GM12878 (cell line): ENCODE measurements at regions of chr1 and their contacts with region 1.

Region 1: DNA sequence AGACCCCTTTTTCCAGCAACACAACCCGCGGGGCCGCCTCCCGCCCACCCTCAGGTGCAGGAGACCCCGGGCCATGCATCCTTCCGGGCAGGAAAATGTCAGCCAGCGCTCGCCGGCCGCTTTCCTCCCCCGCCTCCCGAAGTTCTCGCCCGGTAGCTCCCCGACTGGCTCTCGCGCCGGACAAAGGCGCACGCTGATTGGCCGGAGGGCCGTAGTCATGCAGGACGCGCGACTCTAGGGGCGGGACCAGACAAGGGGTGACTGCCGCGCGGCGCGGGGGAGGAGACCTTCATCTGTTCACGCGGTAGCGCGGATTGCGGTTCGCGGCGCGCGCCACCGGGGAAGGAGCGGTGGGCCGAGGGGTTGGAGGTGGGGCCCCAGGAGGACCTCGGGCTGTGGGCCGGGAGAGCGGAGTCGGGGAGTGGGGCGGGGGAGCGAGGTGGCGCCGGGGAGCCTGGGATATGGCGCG is at the start of gene FLVCR1:
- DNase-seq: peak; percentile 79
- ATAC-seq: peak; percentile 97
- H3K4me3 ChIP-seq: peak within 1 kb of the TSS; percentile 98
- H3K27ac ChIP-seq: peak within 1 kb of the TSS; percentile 79
- H3K4me1 ChIP-seq: peaks cover 6% of the 10 kb centered on the region
- H3K27me3 ChIP-seq: no peaks in the 10 kb centered on the region
- CTCF ChIP-seq: no peak
- EP300 ChIP-seq: no peak
- POLR2A ChIP-seq: peak; percentile 85
- RAD21 ChIP-seq: no peak
- polyA plus RNA-seq, gene FLVCR1: 7.1 to 8.6 TPM

Region 2: GRCh38 chr1:212791676-212792395 is 66.2 kb before region 1 on chr1 and contains the starts of genes NSL1 and TATDN3:
- CTCF ChIA-PET with region 1: no interaction called
- POLR2A ChIA-PET with region 1: interaction called, 6 read pairs
- RAD21 ChIA-PET with region 1: interaction called, 7 read pairs
- SMC1A ChIA-PET with region 1: interaction called, 5 read pairs
- in situ Hi-C with region 1: no loop called
- intact Hi-C with region 1: loop called (anchors 2 kb)
- DNase-seq: peak; percentile 90
- ATAC-seq: peak; percentile 83
- H3K4me3 ChIP-seq: peak within 1 kb of the TSS; percentile 78
- H3K27ac ChIP-seq: peak within 1 kb of the TSS; percentile 97
- H3K4me1 ChIP-seq: peaks cover 8% of the 10 kb centered on the region
- H3K27me3 ChIP-seq: no peaks in the 10 kb centered on the region
- CTCF ChIP-seq: no peak
- EP300 ChIP-seq: no peak
- POLR2A ChIP-seq: peak; percentile 99
- RAD21 ChIP-seq: no peak
- polyA plus RNA-seq, gene NSL1: 46.5 to 67.2 TPM
- polyA plus RNA-seq, gene TATDN3: 34.0 to 40.0 TPM

Region 3: GRCh38 chr1:212827824-212828278 is 30.2 kb before region 1 on chr1:
- CTCF ChIA-PET with region 1: interaction called, 3 read pairs
- POLR2A ChIA-PET with region 1: interaction called, 31 read pairs
- RAD21 ChIA-PET with region 1: interaction called, 16 read pairs
- SMC1A ChIA-PET with region 1: interaction called, 8 read pairs
- in situ Hi-C with region 1: no loop called
- intact Hi-C with region 1: no loop called
- DNase-seq: no peak
- ATAC-seq: no peak
- H3K4me3 ChIP-seq: no peak overlapping the region
- H3K27ac ChIP-seq: no peak overlapping the region
- H3K4me1 ChIP-seq: peaks cover 7% of the 10 kb centered on the region
- H3K27me3 ChIP-seq: no peaks in the 10 kb centered on the region
- CTCF ChIP-seq: no peak
- EP300 ChIP-seq: no peak
- POLR2A ChIP-seq: no peak
- RAD21 ChIP-seq: no peak

Region 4: GRCh38 chr1:212873518-212873917 is 15.5 kb after region 1 on chr1:
- CTCF ChIA-PET with region 1: interaction called, 3 read pairs
- POLR2A ChIA-PET with region 1: interaction called, 7 read pairs
- RAD21 ChIA-PET with region 1: interaction called, 6 read pairs
- SMC1A ChIA-PET with region 1: interaction called, 21 read pairs
- in situ Hi-C with region 1: no loop called
- intact Hi-C with region 1: no loop called
- DNase-seq: peak; percentile 77
- ATAC-seq: peak; percentile 82
- H3K4me3 ChIP-seq: peak overlapping the region; percentile 8; the same call in 1 of the 2 replicates
- H3K27ac ChIP-seq: peak overlapping the region; percentile 46
- H3K4me1 ChIP-seq: peaks cover 11% of the 10 kb centered on the region
- H3K27me3 ChIP-seq: no peaks in the 10 kb centered on the region
- CTCF ChIP-seq: no peak
- EP300 ChIP-seq: peak; percentile 57 to 77; a peak in 3 of 4 replicates
- POLR2A ChIP-seq: no peak
- RAD21 ChIP-seq: no peak

Region 5: DNA sequence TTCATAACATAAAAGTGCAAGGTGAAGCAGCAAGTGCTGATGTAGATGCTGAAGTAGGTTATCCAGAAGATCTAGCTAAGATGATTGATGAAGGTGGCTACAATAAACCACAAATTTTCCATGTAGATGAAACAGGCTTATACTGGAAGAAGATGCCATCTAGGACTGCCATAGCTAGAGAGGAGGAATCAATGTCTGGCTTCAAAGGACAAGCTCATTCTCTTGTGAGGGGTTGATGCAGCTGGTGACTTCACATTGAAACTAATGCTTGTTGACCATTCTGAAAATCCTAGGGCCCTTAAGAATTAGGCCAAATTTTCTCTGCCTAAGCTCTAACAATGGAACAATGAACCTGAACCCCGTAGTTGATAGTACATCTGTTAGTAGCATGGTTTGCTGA is 34.1 kb after region 1 on chr1:
- CTCF ChIA-PET with region 1: no interaction called
- POLR2A ChIA-PET with region 1: interaction called, 10 read pairs
- RAD21 ChIA-PET with region 1: interaction called, 3 read pairs
- SMC1A ChIA-PET with region 1: interaction called, 3 read pairs
- in situ Hi-C with region 1: no loop called
- intact Hi-C with region 1: no loop called
- DNase-seq: no peak
- ATAC-seq: no peak
- H3K4me3 ChIP-seq: no peak overlapping the region
- H3K27ac ChIP-seq: no peak overlapping the region
- H3K4me1 ChIP-seq: no peaks in the 10 kb centered on the region
- H3K27me3 ChIP-seq: no peaks in the 10 kb centered on the region
- CTCF ChIP-seq: no peak
- EP300 ChIP-seq: no peak
- POLR2A ChIP-seq: no peak
- RAD21 ChIP-seq: no peak

Region 6: DNA sequence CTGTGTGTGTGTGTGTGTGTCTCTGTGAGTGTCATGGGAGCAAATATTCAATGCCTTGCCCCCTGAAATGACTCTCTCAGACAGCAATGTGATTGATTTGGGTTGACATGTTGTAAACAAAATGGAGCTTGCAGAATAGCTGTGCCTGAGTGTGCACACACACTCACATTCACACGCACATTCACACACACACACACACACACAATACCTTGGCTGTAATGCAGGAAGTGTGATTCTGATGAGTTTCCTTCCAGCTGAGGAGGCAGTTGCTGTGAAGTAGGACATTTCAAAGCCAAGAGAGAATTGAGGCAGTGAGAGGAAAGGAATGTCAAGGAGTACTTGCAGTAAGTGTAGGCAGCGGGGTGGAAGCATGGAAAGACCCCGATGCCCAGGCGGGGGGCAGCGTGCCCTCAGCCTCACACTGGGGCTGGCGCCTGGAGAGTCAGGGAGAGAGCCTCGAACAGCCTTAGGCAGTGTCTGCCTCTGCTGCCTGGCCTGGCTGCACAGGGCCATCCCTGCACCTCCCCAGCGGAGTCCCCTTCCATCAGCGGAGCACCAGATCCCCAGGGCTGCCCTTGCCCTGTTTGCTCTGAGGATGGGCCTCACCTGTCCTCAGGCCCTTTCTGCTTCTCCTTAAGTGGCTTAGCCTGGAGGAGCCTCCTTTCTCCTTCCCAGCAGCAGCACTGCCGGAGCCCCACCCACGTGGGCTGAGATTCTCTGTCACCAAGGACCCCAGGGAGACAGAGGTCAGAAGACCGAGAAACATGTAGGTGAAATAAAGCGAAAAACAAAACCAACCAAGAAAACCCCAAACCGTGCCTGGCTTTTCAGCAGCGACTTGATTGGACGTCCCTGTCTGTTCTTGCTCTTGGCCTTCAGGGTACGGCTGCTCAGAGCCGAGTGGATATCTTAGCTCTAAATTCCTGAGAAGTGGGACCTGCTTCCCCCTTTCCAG is 101.5 kb after region 1 on chr1:
- CTCF ChIA-PET with region 1: interaction called, 3 read pairs
- POLR2A ChIA-PET with region 1: interaction called, 11 read pairs
- RAD21 ChIA-PET with region 1: interaction called, 7 read pairs
- SMC1A ChIA-PET with region 1: interaction called, 6 read pairs
- in situ Hi-C with region 1: no loop called
- intact Hi-C with region 1: loop called (anchors 5 kb)
- DNase-seq: peak; percentile 79
- ATAC-seq: peak; percentile 77
- H3K4me3 ChIP-seq: peak overlapping the region; percentile 37; the same call in 1 of the 2 replicates
- H3K27ac ChIP-seq: peak overlapping the region; percentile 91
- H3K4me1 ChIP-seq: peaks cover 75% of the 10 kb centered on the region
- H3K27me3 ChIP-seq: no peaks in the 10 kb centered on the region
- CTCF ChIP-seq: no peak
- EP300 ChIP-seq: no peak
- POLR2A ChIP-seq: no peak
- RAD21 ChIP-seq: no peak

Region 7: DNA sequence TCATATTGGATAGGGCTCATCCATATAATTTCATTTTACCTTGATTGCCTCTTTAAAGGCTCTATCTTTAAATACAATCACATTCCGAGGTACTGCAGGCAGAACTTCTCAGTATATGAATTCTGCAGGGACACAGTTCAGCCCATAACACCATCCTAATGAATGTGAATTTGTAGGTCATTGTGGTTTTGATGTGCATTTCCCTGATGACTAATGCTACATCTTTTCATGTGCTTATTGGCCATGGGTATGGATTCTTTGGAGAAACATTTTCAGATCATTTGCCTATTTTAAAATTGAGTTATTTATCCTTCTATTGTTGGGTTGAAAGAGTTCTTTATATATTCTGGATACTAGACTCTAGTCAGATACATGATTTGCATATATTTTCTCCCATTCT is 183.4 kb after region 1 on chr1:
- CTCF ChIA-PET with region 1: no interaction called
- POLR2A ChIA-PET with region 1: no interaction called
- RAD21 ChIA-PET with region 1: no interaction called
- SMC1A ChIA-PET with region 1: no interaction called
- in situ Hi-C with region 1: no loop called
- intact Hi-C with region 1: no loop called
- DNase-seq: no peak
- ATAC-seq: no peak
- H3K4me3 ChIP-seq: no peak overlapping the region
- H3K27ac ChIP-seq: no peak overlapping the region
- H3K4me1 ChIP-seq: no peaks in the 10 kb centered on the region
- H3K27me3 ChIP-seq: no peaks in the 10 kb centered on the region
- CTCF ChIP-seq: no peak
- EP300 ChIP-seq: no peak
- POLR2A ChIP-seq: no peak
- RAD21 ChIP-seq: no peak